Activated CD8-positive, alpha-beta T cell treated with anti-CD3 and anti-CD28 coated beads, Interleukin-2, amount 10 ng/mL, durations not matched to agents 7 days and 5 days (primary cell): ENCODE measurements at regions of chr7 and their contacts with region 1.

Region 1: GRCh38 chr7:10939911-10940703 is 33.6 kb upstream of the PHF14 start:
- DNase-seq: peak; percentile 86
- ATAC-seq: peak; percentile 92
- H3K4me3 Mint-ChIP-seq: no peak overlapping the region
- H3K27ac Mint-ChIP-seq: no peak overlapping the region
- H3K4me1 Mint-ChIP-seq: peaks cover 24% of the 10 kb centered on the region
- H3K27me3 Mint-ChIP-seq: no peaks in the 10 kb centered on the region

Region 2: GRCh38 chr7:10756981-10757380 is 183.1 kb before region 1 on chr7:
- CTCF ChIA-PET with region 1: no interaction called
- POLR2A ChIA-PET with region 1: no interaction called
- DNase-seq: no peak
- ATAC-seq: no peak
- H3K4me3 Mint-ChIP-seq: no peak overlapping the region
- H3K27ac Mint-ChIP-seq: no peak overlapping the region
- H3K4me1 Mint-ChIP-seq: no peaks in the 10 kb centered on the region
- H3K27me3 Mint-ChIP-seq: no peaks in the 10 kb centered on the region

Region 3: GRCh38 chr7:10973061-10973944 is 33.2 kb after region 1 on chr7 and contains the start of gene PHF14:
- CTCF ChIA-PET with region 1: interaction called, 3 read pairs
- POLR2A ChIA-PET with region 1: interaction called, 22 read pairs
- DNase-seq: peak; percentile 97
- ATAC-seq: peak; percentile 99
- H3K4me3 Mint-ChIP-seq: peak within 1 kb of the TSS; percentile 95
- H3K27ac Mint-ChIP-seq: peak within 1 kb of the TSS; percentile 92
- H3K4me1 Mint-ChIP-seq: peaks cover 48% of the 10 kb centered on the region
- H3K27me3 Mint-ChIP-seq: peaks cover 6% of the 10 kb centered on the region
- total RNA-seq, gene PHF14: 32.1 to 37.8 TPM

Region 4: DNA sequence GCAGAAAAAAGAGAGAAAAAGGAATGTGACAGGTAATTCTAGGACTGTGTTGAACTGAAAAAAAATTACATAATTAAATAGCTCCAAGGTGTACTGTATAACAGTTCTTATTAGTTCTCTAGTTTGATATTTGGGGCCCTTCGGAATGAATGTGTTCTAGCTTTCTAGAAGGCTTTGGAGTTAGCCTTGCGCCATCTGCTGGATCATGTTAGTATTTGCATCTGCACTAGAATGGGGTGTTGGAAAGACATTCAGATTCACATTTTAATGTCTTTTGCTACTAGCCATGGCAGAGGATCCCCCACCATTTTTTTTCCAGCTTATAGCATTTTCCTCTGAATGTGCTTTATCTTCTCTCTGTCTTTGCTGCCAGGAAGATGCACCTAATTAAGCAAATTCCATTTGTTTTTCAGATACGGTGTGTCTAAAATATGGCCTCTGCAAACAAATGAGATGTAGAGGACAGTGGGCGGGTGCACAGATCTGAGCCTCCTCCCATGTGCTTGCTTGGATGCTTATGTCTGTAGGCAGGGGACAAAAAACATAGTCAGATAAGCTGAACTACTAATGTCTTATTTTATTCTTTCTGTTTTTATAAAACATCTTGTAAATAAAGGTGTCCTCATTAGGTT is 272.1 kb after region 1 on chr7:
- CTCF ChIA-PET with region 1: interaction called, 17 read pairs
- POLR2A ChIA-PET with region 1: no interaction called
- DNase-seq: peak; percentile 65
- ATAC-seq: peak; percentile 75
- H3K4me3 Mint-ChIP-seq: no peak overlapping the region
- H3K27ac Mint-ChIP-seq: no peak overlapping the region
- H3K4me1 Mint-ChIP-seq: no peaks in the 10 kb centered on the region
- H3K27me3 Mint-ChIP-seq: peaks cover 4% of the 10 kb centered on the region